CD4-positive, alpha-beta T cell (primary cell): ENCODE measurements at regions of chr16 and their contacts with region 1.

Region 1: DNA sequence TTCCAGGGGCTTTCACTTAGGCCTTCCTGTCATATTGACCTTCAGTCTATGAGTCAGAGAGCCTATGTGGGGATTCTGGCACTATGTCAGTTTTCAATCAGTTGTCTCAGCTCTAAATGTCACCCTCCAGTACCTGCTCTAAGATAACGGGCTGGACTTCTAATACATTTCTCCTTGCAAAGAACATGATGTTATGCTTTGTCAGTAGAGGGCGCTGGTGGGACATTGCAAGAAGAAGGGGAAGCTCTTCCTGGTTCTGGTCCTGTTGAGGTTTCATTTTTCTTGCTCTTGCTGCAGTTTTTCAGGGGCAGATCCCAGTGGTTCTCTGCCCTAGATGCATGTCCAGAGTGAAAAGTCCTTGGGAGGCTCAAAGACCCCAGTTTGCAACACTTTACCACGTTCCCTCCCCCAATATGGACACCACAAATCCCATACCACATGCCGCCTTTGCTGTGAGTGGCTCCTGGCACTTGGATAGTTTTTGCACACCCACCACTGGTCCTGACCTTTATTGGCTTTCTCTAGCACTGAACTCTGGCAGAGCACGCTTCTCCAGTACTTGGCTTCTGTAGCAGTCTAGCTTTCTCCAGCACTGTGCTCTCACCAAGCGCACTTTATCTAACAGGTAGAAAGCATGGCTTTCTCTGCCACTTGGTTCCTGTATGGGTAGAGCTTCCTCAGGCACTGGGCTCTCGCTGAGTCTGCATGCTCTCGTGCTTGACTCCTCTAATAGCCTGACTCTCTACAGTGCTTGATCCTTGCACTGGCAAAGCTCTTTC is 49.0 kb downstream of the BCL7C start:
- DNase-seq: peak; percentile 52 to 93 (median 79)
- ATAC-seq: peak; percentile 96
- H3K4me3 ChIP-seq: no peak overlapping the region
- H3K4me3 Mint-ChIP-seq: peak overlapping the region; percentile 52
- H3K27ac ChIP-seq: no peak overlapping the region
- H3K27ac Mint-ChIP-seq: peak overlapping the region; percentile 24
- H3K4me1 ChIP-seq: peaks cover 8% of the 10 kb centered on the region
- H3K4me1 Mint-ChIP-seq: peaks cover 11% of the 10 kb centered on the region
- H3K27me3 ChIP-seq: no peaks in the 10 kb centered on the region
- H3K27me3 Mint-ChIP-seq: no peaks in the 10 kb centered on the region
- CTCF ChIP-seq: peak; percentile 91

Region 2: DNA sequence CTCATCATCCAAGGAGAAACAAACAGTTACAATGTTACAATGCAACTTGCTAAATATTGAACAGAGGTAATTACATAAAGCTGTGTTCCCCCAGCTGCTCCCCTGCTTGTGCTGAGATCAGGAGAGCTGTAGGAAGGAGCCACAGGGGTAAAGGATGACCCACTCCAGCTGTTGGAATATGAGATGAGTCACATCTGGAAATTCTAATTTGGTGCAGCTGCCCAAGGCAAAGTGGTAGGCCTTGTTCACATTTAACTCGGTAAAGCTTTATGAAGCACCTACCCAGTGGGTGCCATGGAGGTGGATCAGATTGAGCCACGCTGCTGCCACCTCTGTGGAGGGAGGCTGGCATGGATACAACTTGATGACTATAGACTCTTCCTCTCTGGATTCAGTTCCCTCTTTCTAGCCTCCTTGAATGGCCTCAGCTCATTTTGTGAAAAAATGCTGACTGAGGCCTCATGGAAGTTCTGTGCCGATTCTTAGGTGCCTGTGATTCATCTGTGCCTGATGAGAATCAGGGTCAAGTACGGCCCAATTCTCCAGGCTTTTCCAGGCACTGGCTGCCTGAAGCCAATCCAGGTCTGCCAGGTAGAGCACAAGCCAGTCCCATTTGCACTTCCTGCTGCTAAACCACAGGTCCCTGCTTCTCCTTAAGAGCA is 242.1 kb before region 1 on chr16:
- CTCF ChIA-PET with region 1: no interaction called
- POLR2A ChIA-PET with region 1: no interaction called
- intact Hi-C with region 1: no loop called
- DNase-seq: peak in 2 of 14 experiments; percentile 20 to 26
- ATAC-seq: no peak
- H3K4me3 ChIP-seq: no peak overlapping the region
- H3K4me3 Mint-ChIP-seq: no peak overlapping the region
- H3K27ac ChIP-seq: no peak overlapping the region
- H3K27ac Mint-ChIP-seq: no peak overlapping the region
- H3K4me1 ChIP-seq: peaks cover 7% of the 10 kb centered on the region
- H3K4me1 Mint-ChIP-seq: peaks cover 9% of the 10 kb centered on the region
- H3K27me3 ChIP-seq: no peaks in the 10 kb centered on the region
- H3K27me3 Mint-ChIP-seq: no peaks in the 10 kb centered on the region
- CTCF ChIP-seq: no peak

Region 3: GRCh38 chr16:30813821-30814189 is 31.1 kb before region 1 on chr16:
- CTCF ChIA-PET with region 1: interaction called, 11 read pairs
- POLR2A ChIA-PET with region 1: interaction called, 3 read pairs
- intact Hi-C with region 1: no loop called
- DNase-seq: no peak
- ATAC-seq: peak; percentile 8
- H3K4me3 ChIP-seq: peak overlapping the region; percentile 65
- H3K4me3 Mint-ChIP-seq: peak overlapping the region; percentile 85
- H3K27ac ChIP-seq: peak overlapping the region; percentile 26 to 64
- H3K27ac Mint-ChIP-seq: peak overlapping the region; percentile 81
- H3K4me1 ChIP-seq: peaks cover 17% of the 10 kb centered on the region
- H3K4me1 Mint-ChIP-seq: peaks cover 15% of the 10 kb centered on the region
- H3K27me3 ChIP-seq: no peaks in the 10 kb centered on the region
- H3K27me3 Mint-ChIP-seq: no peaks in the 10 kb centered on the region
- CTCF ChIP-seq: no peak

Region 4: GRCh38 chr16:30893744-30894539 is 49.1 kb after region 1 on chr16 and contains the start of gene BCL7C:
- CTCF ChIA-PET with region 1: interaction called, 14 read pairs
- POLR2A ChIA-PET with region 1: no interaction called
- intact Hi-C with region 1: no loop called
- DNase-seq: peak; percentile 51 to 89 (median 74)
- ATAC-seq: peak; percentile 72
- H3K4me3 ChIP-seq: peak within 1 kb of the TSS; percentile 88
- H3K4me3 Mint-ChIP-seq: peak within 1 kb of the TSS; percentile 88
- H3K27ac ChIP-seq: peak within 1 kb of the TSS; percentile 73 to 85
- H3K27ac Mint-ChIP-seq: peak within 1 kb of the TSS; percentile 72
- H3K4me1 ChIP-seq: peaks cover 45% of the 10 kb centered on the region
- H3K4me1 Mint-ChIP-seq: peaks cover 49% of the 10 kb centered on the region
- H3K27me3 ChIP-seq: no peaks in the 10 kb centered on the region
- H3K27me3 Mint-ChIP-seq: no peaks in the 10 kb centered on the region
- CTCF ChIP-seq: no peak
- total RNA-seq, gene BCL7C: 17.8 to 19.1 TPM

Region 5: DNA sequence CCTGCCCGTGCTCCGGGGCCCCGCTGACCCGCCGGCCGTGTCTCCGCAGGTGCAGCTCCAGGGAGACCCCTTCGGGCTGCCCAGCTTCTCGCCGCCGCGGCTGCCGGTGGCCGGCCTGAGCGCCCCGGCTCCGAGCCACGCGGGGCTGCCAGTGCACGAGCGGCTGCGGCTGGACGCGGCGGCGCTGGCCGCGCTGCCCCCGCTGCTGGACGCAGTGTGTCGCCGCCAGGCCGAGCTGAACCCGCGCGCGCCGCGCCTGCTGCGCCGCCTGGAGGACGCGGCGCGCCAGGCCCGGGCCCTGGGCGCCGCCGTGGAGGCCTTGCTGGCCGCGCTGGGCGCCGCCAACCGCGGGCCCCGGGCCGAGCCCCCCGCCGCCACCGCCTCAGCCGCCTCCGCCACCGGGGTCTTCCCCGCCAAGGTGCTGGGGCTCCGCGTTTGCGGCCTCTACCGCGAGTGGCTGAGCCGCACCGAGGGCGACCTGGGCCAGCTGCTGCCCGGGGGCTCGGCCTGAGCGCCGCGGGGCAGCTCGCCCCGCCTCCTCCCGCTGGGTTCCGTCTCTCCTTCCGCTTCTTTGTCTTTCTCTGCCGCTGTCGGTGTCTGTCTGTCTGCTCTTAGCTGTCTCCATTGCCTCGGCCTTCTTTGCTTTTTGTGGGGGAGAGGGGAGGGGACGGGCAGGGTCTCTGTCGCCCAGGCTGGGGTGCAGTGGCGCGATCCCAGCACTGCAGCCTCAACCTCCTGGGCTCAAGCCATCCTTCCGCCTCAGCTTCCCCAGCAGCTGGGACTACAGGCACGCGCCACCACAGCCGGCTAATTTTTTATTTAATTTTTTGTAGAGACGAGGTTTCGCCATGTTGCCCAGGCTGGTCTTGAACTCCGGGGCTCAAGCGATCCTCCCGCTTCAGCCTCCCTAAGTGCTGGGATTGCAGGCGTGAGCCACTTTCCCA is 57.4 kb after region 1 on chr16:
- CTCF ChIA-PET with region 1: interaction called, 75 read pairs
- POLR2A ChIA-PET with region 1: interaction called, 56 read pairs
- intact Hi-C with region 1: loop called (anchors 1 to 5 kb)
- DNase-seq: peak in 12 of 14 experiments; percentile 25 to 83 (median 52)
- ATAC-seq: peak; percentile 85
- H3K4me3 ChIP-seq: peak overlapping the region; percentile 58
- H3K4me3 Mint-ChIP-seq: peak overlapping the region; percentile 97
- H3K27ac ChIP-seq: peak overlapping the region; percentile 67 to 81
- H3K27ac Mint-ChIP-seq: peak overlapping the region; percentile 87
- H3K4me1 ChIP-seq: peaks cover 44% of the 10 kb centered on the region
- H3K4me1 Mint-ChIP-seq: peaks cover 32% of the 10 kb centered on the region
- H3K27me3 ChIP-seq: no peaks in the 10 kb centered on the region
- H3K27me3 Mint-ChIP-seq: no peaks in the 10 kb centered on the region
- CTCF ChIP-seq: no peak

Region 6: GRCh38 chr16:30941600-30942425 is 97.0 kb after region 1 on chr16:
- CTCF ChIA-PET with region 1: interaction called, 12 read pairs
- POLR2A ChIA-PET with region 1: interaction called, 9 read pairs
- intact Hi-C with region 1: loop called (anchors 1 kb)
- DNase-seq: peak; percentile 34 to 85 (median 50)
- ATAC-seq: peak; percentile 95
- H3K4me3 ChIP-seq: no peak overlapping the region
- H3K4me3 Mint-ChIP-seq: no peak overlapping the region
- H3K27ac ChIP-seq: peak overlapping the region in 1 of 2 donors; percentile 52
- H3K27ac Mint-ChIP-seq: no peak overlapping the region
- H3K4me1 ChIP-seq: peaks cover 13% of the 10 kb centered on the region
- H3K4me1 Mint-ChIP-seq: peaks cover 19% of the 10 kb centered on the region
- H3K27me3 ChIP-seq: no peaks in the 10 kb centered on the region
- H3K27me3 Mint-ChIP-seq: no peaks in the 10 kb centered on the region
- CTCF ChIP-seq: peak; percentile 87